Mucosa of descending colon (tissue), 3 donors: ENCODE measurements at regions of chrX and their contacts with region 1.

Region 1: GRCh38 chrX:109485470-109486340 is 3.8 kb upstream of the GUCY2F start:
- DNase-seq: peak in 2 of 3 donors; percentile 37 to 76
- ATAC-seq: peak; percentile 85
- H3K4me3 ChIP-seq: no peak overlapping the region
- H3K4me1 ChIP-seq: no peaks in the 10 kb centered on the region
- CTCF ChIP-seq: peak; percentile 70

Region 2: DNA sequence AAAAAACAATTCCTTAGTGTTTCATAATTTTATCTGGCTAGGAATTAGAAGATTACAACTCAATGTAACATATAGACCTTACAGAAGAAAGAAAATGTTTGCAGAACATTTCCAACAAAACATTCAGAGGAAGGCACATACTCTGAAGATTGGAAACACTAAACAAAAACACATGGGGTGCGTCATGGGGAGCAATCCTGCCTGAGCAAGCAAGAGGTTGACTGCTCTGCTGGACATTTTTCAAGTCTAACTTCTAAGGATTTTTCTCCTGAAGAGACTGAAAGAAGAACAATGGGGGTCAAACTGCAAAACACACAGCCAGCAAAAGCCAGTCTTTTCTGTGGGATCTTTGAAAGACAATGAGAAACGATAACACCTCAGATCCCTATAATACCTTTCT is 186.6 kb before region 1 on chrX:
- intact Hi-C with region 1: no loop called
- DNase-seq: no peak
- ATAC-seq: no peak
- H3K4me3 ChIP-seq: no peak overlapping the region
- H3K4me1 ChIP-seq: no peaks in the 10 kb centered on the region
- CTCF ChIP-seq: no peak

Region 3: DNA sequence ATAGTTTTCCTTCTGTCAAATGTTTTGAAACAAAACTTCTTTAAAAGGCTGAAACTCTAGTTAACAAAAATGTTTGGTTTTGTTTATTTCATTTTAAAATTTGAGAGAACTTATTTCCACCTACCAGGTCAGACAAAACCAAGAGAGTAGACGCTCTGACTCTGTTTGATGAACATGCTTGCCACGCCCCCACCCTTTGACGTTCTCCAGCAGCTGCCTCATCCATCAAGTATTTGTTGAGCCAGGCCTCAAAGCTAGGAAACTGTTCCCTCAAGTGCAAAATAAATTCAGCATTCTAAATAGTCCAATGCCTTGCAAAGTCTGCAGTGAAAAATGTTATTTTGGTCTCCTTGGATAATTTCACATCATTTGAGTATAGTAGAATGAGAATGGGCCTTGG is 125.4 kb before region 1 on chrX:
- intact Hi-C with region 1: no loop called
- DNase-seq: no peak
- ATAC-seq: no peak
- H3K4me3 ChIP-seq: no peak overlapping the region
- H3K4me1 ChIP-seq: no peaks in the 10 kb centered on the region
- CTCF ChIP-seq: no peak

Region 4: GRCh38 chrX:109632906-109633504 is 147.3 kb after region 1 on chrX:
- intact Hi-C with region 1: loop called in 1 of 2 experiments (anchors 2 kb)
- DNase-seq: peak in 1 of 3 donors; percentile 15
- ATAC-seq: no peak
- H3K4me3 ChIP-seq: no peak overlapping the region
- H3K4me1 ChIP-seq: no peaks in the 10 kb centered on the region
- CTCF ChIP-seq: no peak